WTC11 (cell line): ENCODE measurements at regions of chr11 and their contacts with region 1.

Region 1: DNA sequence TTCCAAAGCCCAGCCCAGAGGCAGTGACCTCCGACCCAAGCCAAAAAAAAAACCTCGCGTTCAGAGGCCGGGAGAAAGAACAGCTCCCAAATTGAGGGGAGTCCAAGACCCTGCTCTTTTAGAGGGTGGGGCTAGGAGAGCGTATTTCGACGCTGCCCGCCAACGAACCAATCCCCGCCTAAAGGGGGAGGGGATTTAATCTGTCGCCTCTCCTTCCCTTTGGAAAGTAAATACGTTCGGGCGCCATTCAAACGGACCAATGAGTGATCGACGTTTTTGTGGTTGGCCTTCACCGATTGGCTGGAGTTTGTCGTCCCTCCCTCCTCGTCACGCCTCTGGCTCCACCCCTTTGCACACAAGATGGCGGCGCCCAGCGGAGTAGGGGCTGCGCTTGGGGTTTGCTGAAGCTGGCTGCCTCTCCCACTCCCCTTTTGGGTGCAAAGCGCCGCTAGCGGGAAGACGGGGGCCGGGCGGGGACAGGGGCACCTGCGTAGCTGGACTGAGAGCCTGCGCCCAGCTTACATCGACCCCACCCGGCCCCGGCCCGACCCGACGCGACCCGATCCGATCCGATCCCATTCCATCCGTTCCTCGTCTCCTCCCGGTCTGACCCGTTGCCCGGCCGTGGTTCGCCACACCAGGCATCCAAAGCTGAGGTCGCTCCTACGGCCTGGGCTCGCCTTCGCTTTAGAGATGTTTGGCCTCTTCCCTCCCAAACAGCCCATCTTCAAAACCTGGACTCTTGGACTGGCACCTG is at the start of gene RNF26:
- DNase-seq: peak; percentile 95
- ATAC-seq: peak; percentile 82
- H3K4me3 Mint-ChIP-seq: peak within 1 kb of the TSS; percentile 100
- H3K27ac Mint-ChIP-seq: peak within 1 kb of the TSS; percentile 100
- H3K4me1 Mint-ChIP-seq: peaks cover 44% of the 10 kb centered on the region
- H3K27me3 Mint-ChIP-seq: peaks cover 11% of the 10 kb centered on the region
- CTCF ChIP-seq: no peak
- total RNA-seq, gene RNF26: 90.0 to 91.1 TPM (median 90.6 TPM) in 3 replicates

Region 2: DNA sequence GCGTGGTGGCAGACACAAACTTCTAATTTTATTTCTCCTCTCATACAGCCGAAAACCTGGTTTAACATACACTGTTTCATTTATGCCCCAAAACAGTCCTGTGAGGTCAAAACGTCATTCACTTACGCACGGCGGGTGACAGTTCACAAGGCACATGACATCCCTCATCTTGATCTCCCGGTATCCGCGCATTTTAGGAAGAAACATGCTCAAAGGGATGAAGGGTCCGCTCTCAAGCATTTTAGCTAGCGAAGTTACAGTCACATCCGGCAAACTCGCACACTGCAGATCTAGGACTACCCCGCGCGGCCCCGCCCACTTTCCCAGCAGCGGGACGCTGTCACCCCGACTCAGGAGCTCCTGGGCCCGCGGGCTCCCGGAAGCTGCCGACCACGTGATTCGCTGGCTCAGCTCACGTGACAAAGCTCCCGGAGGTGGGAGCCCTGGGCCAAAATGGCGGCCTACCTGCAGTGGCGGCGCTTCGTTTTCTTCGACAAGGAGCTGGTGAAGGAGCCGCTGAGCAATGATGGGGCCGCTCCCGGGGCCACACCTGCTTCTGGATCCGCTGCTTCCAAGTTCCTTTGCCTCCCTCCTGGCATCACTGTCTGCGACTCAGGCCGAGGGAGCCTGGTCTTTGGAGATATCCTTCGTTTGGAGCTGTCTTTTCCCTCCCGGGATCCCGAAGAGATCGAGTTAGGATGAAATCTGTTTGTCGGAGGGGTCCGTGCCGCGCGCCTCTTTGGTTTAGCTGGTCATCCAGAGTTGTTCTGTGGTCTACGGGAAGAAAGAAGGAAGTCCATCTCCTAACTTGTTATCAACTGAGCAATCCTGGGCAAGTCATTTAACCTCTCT is 266.8 kb before region 1 on chr11 and contains the start of gene VPS11:
- CTCF ChIA-PET with region 1: interaction called, 14 read pairs
- POLR2A ChIA-PET with region 1: no interaction called
- DNase-seq: peak; percentile 97
- ATAC-seq: peak; percentile 93
- H3K4me3 Mint-ChIP-seq: peak within 1 kb of the TSS; percentile 96
- H3K27ac Mint-ChIP-seq: peak within 1 kb of the TSS; percentile 95
- H3K4me1 Mint-ChIP-seq: peaks cover 10% of the 10 kb centered on the region
- H3K27me3 Mint-ChIP-seq: no peaks in the 10 kb centered on the region
- CTCF ChIP-seq: no peak
- total RNA-seq, gene VPS11: 17.2 to 20.2 TPM (median 18.4 TPM) in 3 replicates

Region 3: GRCh38 chr11:119196833-119197483 is 137.4 kb before region 1 on chr11:
- CTCF ChIA-PET with region 1: interaction called, 11 read pairs
- POLR2A ChIA-PET with region 1: no interaction called
- DNase-seq: peak; percentile 68
- ATAC-seq: peak; percentile 73
- H3K4me3 Mint-ChIP-seq: no peak overlapping the region
- H3K27ac Mint-ChIP-seq: no peak overlapping the region
- H3K4me1 Mint-ChIP-seq: peaks cover 28% of the 10 kb centered on the region
- H3K27me3 Mint-ChIP-seq: no peaks in the 10 kb centered on the region; the same call in 1 of the 2 replicates
- CTCF ChIP-seq: peak; percentile 54

Region 4: DNA sequence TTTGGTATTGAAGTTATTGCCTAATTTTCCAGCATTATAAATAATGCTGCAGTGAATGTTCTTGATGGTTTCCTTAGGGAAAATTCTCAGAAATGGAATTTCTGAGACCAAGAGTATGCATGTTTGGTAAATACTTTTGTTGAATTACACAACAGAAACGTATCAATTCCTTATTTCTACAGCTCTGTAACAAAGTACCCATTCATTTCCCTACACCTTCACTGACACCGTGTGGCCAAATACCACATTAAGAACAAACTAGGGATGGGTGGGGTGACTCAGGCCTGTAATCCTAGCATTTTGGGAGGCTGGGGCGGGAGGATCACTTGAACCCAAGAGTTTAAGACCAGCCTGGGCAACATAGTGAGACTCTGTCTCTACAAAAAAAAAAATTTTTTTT is 39.2 kb before region 1 on chr11:
- CTCF ChIA-PET with region 1: no interaction called
- POLR2A ChIA-PET with region 1: no interaction called
- DNase-seq: no peak
- ATAC-seq: no peak
- H3K4me3 Mint-ChIP-seq: no peak overlapping the region
- H3K27ac Mint-ChIP-seq: no peak overlapping the region
- H3K4me1 Mint-ChIP-seq: no peaks in the 10 kb centered on the region
- H3K27me3 Mint-ChIP-seq: no peaks in the 10 kb centered on the region
- CTCF ChIP-seq: no peak

Region 5: DNA sequence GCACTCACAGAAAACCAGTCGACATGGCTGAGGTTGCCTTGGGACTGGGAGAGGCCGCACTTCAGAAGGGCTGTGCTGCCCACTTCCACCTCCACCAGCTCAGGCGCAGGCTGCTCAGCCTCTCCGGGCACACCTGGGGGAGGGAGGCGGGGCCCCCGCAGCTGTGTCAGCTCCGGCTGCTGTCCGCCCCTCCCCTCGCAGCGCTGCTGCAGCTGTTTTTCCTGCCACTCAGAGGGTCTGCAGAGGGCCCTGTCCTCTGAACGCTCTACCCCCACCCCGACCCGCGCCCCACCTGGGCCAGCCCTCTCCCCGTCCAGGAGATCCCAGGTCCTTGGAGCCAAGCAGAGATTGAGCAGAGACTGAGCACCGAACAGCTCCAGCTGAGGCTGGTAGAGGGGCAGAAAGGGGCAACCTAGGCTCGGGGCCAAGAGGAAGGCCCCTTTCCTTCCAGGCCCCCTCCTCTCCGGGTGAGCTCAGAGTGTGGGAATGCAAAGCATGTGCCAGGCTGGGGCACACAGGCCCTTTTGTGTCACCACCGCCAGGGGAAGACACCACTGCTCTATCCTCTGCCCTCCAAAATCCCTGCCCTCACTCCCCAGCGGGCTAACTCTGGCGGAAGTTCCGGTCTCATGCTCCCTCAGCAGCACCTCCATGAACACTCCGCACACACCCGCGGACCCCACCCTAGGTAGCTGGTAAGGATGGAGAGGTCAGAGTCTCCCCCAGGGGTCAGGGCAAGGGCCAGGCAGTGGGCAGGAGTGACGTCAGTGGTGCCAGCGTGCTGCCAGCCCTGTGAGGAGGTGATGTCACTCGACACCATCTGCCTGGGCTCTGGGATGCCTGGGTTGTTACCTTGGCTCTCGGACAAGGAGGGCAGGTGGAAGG is 19.0 kb before region 1 on chr11:
- CTCF ChIA-PET with region 1: interaction called, 387 read pairs
- POLR2A ChIA-PET with region 1: interaction called, 35 read pairs
- DNase-seq: peak; percentile 74
- ATAC-seq: peak; percentile 29
- H3K4me3 Mint-ChIP-seq: peak overlapping the region; percentile 69
- H3K27ac Mint-ChIP-seq: no peak overlapping the region
- H3K4me1 Mint-ChIP-seq: peaks cover 37% of the 10 kb centered on the region
- H3K27me3 Mint-ChIP-seq: peaks cover 44% of the 10 kb centered on the region
- CTCF ChIP-seq: no peak

Region 6: GRCh38 chr11:119356349-119357031 is 22.1 kb after region 1 on chr11:
- CTCF ChIA-PET with region 1: interaction called, 132 read pairs
- POLR2A ChIA-PET with region 1: interaction called, 10 read pairs
- DNase-seq: peak; percentile 91
- ATAC-seq: peak; percentile 80
- H3K4me3 Mint-ChIP-seq: peak overlapping the region; percentile 76
- H3K27ac Mint-ChIP-seq: peak overlapping the region; percentile 36
- H3K4me1 Mint-ChIP-seq: peaks cover 39% of the 10 kb centered on the region
- H3K27me3 Mint-ChIP-seq: peaks cover 19% of the 10 kb centered on the region
- CTCF ChIP-seq: peak; percentile 93

Region 7: GRCh38 chr11:119381181-119381988 is 47.0 kb after region 1 on chr11 and contains the start of gene USP2:
- CTCF ChIA-PET with region 1: interaction called, 262 read pairs
- POLR2A ChIA-PET with region 1: interaction called, 3 read pairs
- DNase-seq: peak; percentile 98
- ATAC-seq: peak; percentile 83
- H3K4me3 Mint-ChIP-seq: no peak within 1 kb of the TSS
- H3K27ac Mint-ChIP-seq: peak within 1 kb of the TSS; percentile 12; the same call in 1 of the 2 replicates
- H3K4me1 Mint-ChIP-seq: peaks cover 40% of the 10 kb centered on the region
- H3K27me3 Mint-ChIP-seq: peaks cover 20% of the 10 kb centered on the region
- CTCF ChIP-seq: peak; percentile 24; the same call in 1 of the 2 replicates
- total RNA-seq, gene USP2: 7.3 to 8.2 TPM (median 8.0 TPM) in 3 replicates

Region 8: GRCh38 chr11:119409731-119410130 is 75.4 kb after region 1 on chr11:
- CTCF ChIA-PET with region 1: no interaction called
- POLR2A ChIA-PET with region 1: no interaction called
- DNase-seq: no peak
- ATAC-seq: no peak
- H3K4me3 Mint-ChIP-seq: no peak overlapping the region
- H3K27ac Mint-ChIP-seq: no peak overlapping the region
- H3K4me1 Mint-ChIP-seq: 0 out of 2 replicates have a peak, but pooled peaks cover 4% of the 10 kb centered on the region
- H3K27me3 Mint-ChIP-seq: no peaks in the 10 kb centered on the region
- CTCF ChIP-seq: no peak